GM12878 (cell line): ENCODE measurements at regions of chr6 and their contacts with region 1.

Region 1: DNA sequence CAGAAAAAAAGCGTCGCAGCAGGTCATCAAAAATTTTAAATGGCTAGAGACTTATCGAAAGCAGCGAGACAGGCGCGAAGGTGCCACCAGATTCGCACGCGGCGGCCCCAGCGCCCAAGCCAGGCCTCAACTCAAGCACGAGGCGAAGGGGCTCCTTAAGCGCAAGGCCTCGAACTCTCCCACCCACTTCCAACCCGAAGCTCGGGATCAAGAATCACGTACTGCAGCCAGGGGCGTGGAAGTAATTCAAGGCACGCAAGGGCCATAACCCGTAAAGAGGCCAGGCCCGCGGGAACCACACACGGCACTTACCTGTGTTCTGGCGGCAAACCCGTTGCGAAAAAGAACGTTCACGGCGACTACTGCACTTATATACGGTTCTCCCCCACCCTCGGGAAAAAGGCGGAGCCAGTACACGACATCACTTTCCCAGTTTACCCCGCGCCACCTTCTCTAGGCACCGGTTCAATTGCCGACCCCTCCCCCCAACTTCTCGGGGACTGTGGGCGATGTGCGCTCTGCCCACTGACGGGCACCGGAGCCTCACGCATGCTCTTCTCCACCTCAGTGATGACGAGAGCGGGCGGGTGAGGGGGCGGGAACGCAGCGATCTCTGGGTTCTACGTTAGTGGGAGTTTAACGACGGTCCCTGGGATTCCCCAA is at the start of gene EEF1A1:
- DNase-seq: peak; percentile 98
- ATAC-seq: peak; percentile 75
- H3K4me3 ChIP-seq: peak within 1 kb of the TSS; percentile 91
- H3K27ac ChIP-seq: peak within 1 kb of the TSS; percentile 100
- H3K4me1 ChIP-seq: peaks cover 13% of the 10 kb centered on the region
- H3K27me3 ChIP-seq: no peaks in the 10 kb centered on the region
- CTCF ChIP-seq: no peak; a peak in 1 of 6 replicates
- EP300 ChIP-seq: peak; percentile 49 to 69; a peak in 2 of 4 replicates
- POLR2A ChIP-seq: peak; percentile 88
- RAD21 ChIP-seq: 0 out of 2 replicates have a peak, but pooled peaks have one; percentile 16
- polyA plus RNA-seq, gene EEF1A1: 8,305 to 13,725 TPM

Region 2: GRCh38 chr6:73400656-73401055 is 120.2 kb before region 1 on chr6:
- CTCF ChIA-PET with region 1: no interaction called
- POLR2A ChIA-PET with region 1: no interaction called
- RAD21 ChIA-PET with region 1: no interaction called
- SMC1A ChIA-PET with region 1: no interaction called
- in situ Hi-C with region 1: no loop called
- intact Hi-C with region 1: no loop called
- DNase-seq: no peak
- ATAC-seq: no peak
- H3K4me3 ChIP-seq: no peak overlapping the region
- H3K27ac ChIP-seq: no peak overlapping the region
- H3K4me1 ChIP-seq: no peaks in the 10 kb centered on the region
- H3K27me3 ChIP-seq: no peaks in the 10 kb centered on the region
- CTCF ChIP-seq: no peak
- EP300 ChIP-seq: no peak
- POLR2A ChIP-seq: no peak
- RAD21 ChIP-seq: no peak

Region 3: DNA sequence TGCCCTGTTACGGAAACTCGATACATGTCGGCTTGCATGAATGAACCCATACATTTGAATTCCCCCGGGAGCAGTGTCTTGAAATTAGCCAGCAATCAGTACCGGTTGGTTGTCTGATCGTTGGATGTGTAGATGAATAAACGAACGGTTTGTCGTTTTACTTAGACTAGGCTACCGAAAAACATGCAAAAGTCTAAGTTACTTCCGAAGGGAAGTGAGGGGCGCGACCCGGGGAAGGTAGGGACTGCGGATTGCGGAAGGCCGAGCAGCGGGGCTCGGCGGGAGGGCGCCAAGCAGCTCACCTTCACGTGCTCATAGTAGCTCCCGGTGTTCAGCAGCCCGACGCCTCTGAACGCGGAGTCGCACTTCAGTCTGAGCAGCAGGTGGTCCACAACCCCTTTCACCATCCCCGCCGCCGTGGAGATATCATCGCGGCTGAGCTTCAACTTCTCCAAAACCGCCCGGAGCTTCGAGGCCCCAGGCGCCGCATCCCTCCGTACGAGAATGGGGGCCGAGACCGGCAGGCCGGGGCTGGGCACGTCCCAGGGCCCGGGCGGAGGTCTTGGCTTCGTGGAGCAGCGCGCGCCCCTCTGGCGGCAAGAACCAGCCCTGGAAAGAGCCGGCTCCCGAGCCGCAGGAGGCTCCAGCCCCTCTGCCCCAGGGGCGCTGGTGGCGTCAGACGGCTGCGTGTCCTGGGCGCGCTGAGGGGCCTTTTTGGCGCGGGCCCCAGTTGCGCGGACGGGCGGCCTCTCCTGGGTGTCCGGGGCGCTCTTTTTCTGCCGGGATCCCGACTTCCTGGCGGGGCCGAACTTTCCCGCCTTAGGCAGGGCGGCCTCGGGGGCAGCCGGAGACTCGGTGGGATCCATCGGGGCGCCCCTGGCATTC is 69.4 kb before region 1 on chr6:
- CTCF ChIA-PET with region 1: interaction called, 6 read pairs
- POLR2A ChIA-PET with region 1: interaction called, 25 read pairs
- RAD21 ChIA-PET with region 1: interaction called, 22 read pairs
- SMC1A ChIA-PET with region 1: interaction called, 18 read pairs
- in situ Hi-C with region 1: no loop called
- intact Hi-C with region 1: loop called (anchors 2 kb)
- DNase-seq: no peak
- ATAC-seq: peak; percentile 72
- H3K4me3 ChIP-seq: peak overlapping the region; percentile 91
- H3K27ac ChIP-seq: peak overlapping the region; percentile 95
- H3K4me1 ChIP-seq: 0 out of 2 replicates have a peak, but pooled peaks cover 3% of the 10 kb centered on the region
- H3K27me3 ChIP-seq: no peaks in the 10 kb centered on the region
- CTCF ChIP-seq: no peak
- EP300 ChIP-seq: no peak
- POLR2A ChIP-seq: peak; percentile 84
- RAD21 ChIP-seq: no peak

Region 4: DNA sequence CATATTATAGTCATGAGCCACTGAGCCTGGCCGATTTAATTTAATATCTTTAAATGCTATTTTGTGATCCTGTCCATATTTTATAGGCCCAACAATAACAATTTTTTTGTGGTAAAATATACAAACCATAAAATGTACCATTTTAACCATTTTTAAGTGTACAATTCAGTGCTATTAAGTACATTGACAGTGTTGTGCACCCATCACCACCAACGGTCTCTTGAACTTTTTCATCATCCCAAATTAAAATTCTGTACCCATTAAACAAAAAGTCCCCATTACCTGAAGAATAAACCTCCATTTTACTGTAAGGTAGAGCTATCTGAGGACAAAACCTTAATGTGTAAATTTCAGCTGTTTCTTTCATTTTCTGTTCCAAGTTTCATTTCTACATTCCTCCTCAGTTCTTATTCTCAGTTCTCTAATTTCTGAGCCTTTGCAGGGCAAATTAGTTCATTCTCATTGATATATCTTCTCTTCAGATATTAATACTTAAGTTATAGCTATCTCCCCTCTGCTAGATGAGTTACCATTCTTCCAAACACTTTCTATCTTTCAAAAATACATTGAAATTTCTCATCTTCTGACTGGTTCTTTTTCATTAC is 49.0 kb before region 1 on chr6:
- CTCF ChIA-PET with region 1: interaction called, 16 read pairs
- POLR2A ChIA-PET with region 1: interaction called, 20 read pairs
- RAD21 ChIA-PET with region 1: interaction called, 6 read pairs
- SMC1A ChIA-PET with region 1: interaction called, 11 read pairs
- in situ Hi-C with region 1: no loop called
- intact Hi-C with region 1: loop called (anchors 2 kb)
- DNase-seq: peak; percentile 58
- ATAC-seq: peak; percentile 98
- H3K4me3 ChIP-seq: peak overlapping the region; percentile 48; the same call in 1 of the 2 replicates
- H3K27ac ChIP-seq: peak overlapping the region; percentile 90
- H3K4me1 ChIP-seq: peaks cover 15% of the 10 kb centered on the region
- H3K27me3 ChIP-seq: no peaks in the 10 kb centered on the region
- CTCF ChIP-seq: no peak
- EP300 ChIP-seq: peak; percentile 43 to 89; a peak in 3 of 4 replicates
- POLR2A ChIP-seq: no peak
- RAD21 ChIP-seq: no peak

Region 5: DNA sequence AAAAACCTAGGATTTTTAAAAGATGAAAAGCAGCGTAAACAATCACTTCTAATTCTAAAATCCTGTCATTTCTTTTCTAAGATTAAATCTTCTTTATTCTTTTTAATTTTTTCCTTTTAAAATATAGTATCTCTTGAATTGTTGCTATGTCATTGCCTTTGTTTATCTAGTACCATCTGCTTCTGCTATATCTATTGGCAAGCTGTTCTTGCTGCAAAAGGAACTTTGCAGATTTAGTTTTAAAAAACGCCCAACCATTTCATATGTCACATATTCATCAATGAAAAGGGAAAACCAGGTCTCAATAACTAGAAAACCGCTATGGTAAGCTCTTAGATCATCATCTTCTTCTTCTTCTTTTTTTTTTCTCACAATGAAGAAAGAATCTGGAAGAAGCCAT is 11.5 kb after region 1 on chr6:
- CTCF ChIA-PET with region 1: interaction called, 23 read pairs
- POLR2A ChIA-PET with region 1: interaction called, 52 read pairs
- RAD21 ChIA-PET with region 1: interaction called, 14 read pairs
- SMC1A ChIA-PET with region 1: interaction called, 24 read pairs
- in situ Hi-C with region 1: no loop called
- intact Hi-C with region 1: no loop called
- DNase-seq: no peak
- ATAC-seq: no peak
- H3K4me3 ChIP-seq: no peak overlapping the region
- H3K27ac ChIP-seq: no peak overlapping the region
- H3K4me1 ChIP-seq: no peaks in the 10 kb centered on the region
- H3K27me3 ChIP-seq: no peaks in the 10 kb centered on the region
- CTCF ChIP-seq: no peak
- EP300 ChIP-seq: no peak
- POLR2A ChIP-seq: no peak
- RAD21 ChIP-seq: no peak

Region 6: DNA sequence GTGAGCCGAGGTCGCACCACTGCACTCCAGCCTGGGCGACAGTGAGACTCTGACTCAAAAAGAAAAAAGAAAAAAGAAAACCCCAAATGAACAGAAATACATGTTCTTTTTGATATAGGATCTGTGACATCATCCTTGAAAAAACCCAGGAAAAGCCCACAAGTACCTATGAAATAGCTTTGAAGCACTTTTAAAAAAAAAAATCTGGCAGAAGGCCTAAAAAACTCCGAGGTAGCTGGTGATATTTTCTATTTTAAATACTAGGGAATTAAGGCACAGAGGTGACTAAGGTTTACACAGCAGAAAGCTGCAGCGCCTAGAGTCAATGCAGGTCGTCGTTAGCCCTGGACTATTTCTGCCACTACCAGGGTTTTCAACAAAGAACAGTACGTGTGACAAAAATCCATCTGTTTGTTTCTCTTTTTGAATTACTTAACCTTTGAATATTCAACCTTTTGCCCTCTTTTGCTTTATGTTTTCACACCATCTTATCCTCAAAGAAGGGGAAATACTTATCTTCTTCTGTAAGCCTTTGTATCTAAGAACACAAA is 39.4 kb after region 1 on chr6:
- CTCF ChIA-PET with region 1: interaction called, 5 read pairs
- POLR2A ChIA-PET with region 1: interaction called, 48 read pairs
- RAD21 ChIA-PET with region 1: interaction called, 42 read pairs
- SMC1A ChIA-PET with region 1: interaction called, 38 read pairs
- in situ Hi-C with region 1: no loop called
- intact Hi-C with region 1: loop called (anchors 1 kb)
- DNase-seq: peak; percentile 30
- ATAC-seq: peak; percentile 65
- H3K4me3 ChIP-seq: peak overlapping the region; percentile 49; the same call in 1 of the 2 replicates
- H3K27ac ChIP-seq: peak overlapping the region; percentile 80
- H3K4me1 ChIP-seq: peaks cover 29% of the 10 kb centered on the region
- H3K27me3 ChIP-seq: no peaks in the 10 kb centered on the region
- CTCF ChIP-seq: no peak
- EP300 ChIP-seq: no peak
- POLR2A ChIP-seq: no peak
- RAD21 ChIP-seq: no peak

Region 7: GRCh38 chr6:73585566-73586415 is 65.0 kb after region 1 on chr6:
- CTCF ChIA-PET with region 1: interaction called, 16 read pairs
- POLR2A ChIA-PET with region 1: interaction called, 55 read pairs
- RAD21 ChIA-PET with region 1: interaction called, 49 read pairs
- SMC1A ChIA-PET with region 1: interaction called, 43 read pairs
- in situ Hi-C with region 1: no loop called
- intact Hi-C with region 1: loop called (anchors 1 kb)
- DNase-seq: peak; percentile 66
- ATAC-seq: peak; percentile 87
- H3K4me3 ChIP-seq: peak overlapping the region; percentile 29
- H3K27ac ChIP-seq: peak overlapping the region; percentile 95
- H3K4me1 ChIP-seq: peaks cover 18% of the 10 kb centered on the region
- H3K27me3 ChIP-seq: no peaks in the 10 kb centered on the region
- CTCF ChIP-seq: no peak
- EP300 ChIP-seq: peak in 1 of 2 experiments; percentile 39; a peak in 1 of 4 replicates
- POLR2A ChIP-seq: no peak
- RAD21 ChIP-seq: no peak

Region 8: GRCh38 chr6:73653571-73654424 is 133.0 kb after region 1 on chr6 and contains the start of gene SLC17A5:
- CTCF ChIA-PET with region 1: interaction called, 14 read pairs
- POLR2A ChIA-PET with region 1: interaction called, 24 read pairs
- RAD21 ChIA-PET with region 1: interaction called, 18 read pairs
- SMC1A ChIA-PET with region 1: interaction called, 31 read pairs
- in situ Hi-C with region 1: loop called (anchors 5 kb)
- intact Hi-C with region 1: loop called (anchors 1 kb)
- DNase-seq: peak; percentile 57
- ATAC-seq: peak; percentile 95
- H3K4me3 ChIP-seq: peak within 1 kb of the TSS; percentile 83
- H3K27ac ChIP-seq: peak within 1 kb of the TSS; percentile 86
- H3K4me1 ChIP-seq: no peaks in the 10 kb centered on the region
- H3K27me3 ChIP-seq: no peaks in the 10 kb centered on the region
- CTCF ChIP-seq: no peak
- EP300 ChIP-seq: 0 out of 4 replicates have a peak, but pooled peaks of 1 of the 2 experiments have one; percentile 6
- POLR2A ChIP-seq: peak; percentile 78
- RAD21 ChIP-seq: no peak
- polyA plus RNA-seq, gene SLC17A5: 2.3 to 2.7 TPM